Right ventricle myocardium superior (tissue), 1 donor: ENCODE measurements at regions of chr17 and their contacts with region 1.

Region 1: GRCh38 chr17:29640413-29640812 is 17.7 kb upstream of the CORO6 start:
- DNase-seq: no peak
- ATAC-seq: peak; percentile 37

Region 2: DNA sequence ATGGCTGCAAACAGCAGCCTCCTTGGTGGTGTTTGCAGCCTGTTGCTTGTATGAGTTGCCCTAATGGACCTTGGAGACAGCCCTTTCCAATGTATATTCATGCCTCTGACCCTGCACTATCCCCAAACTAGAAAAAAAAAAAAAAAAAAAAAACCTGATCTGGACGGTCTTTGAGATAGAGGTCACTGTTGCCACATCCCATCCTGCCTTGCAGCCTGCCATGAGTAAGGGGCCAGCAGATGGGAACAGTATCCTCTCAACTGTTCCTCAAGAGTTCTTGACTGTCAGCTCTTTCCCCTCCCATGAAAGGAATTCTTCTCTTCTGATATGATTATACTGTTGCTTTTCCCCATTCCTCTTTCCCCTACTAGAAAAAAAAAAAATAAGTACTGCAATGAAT is 137.2 kb after region 1 on chr17:
- intact Hi-C with region 1: loop called (anchors 5 kb)
- DNase-seq: no peak
- ATAC-seq: no peak